ENCODE measurements at regions of chr10 and their contacts with region 1.

Region 1: DNA sequence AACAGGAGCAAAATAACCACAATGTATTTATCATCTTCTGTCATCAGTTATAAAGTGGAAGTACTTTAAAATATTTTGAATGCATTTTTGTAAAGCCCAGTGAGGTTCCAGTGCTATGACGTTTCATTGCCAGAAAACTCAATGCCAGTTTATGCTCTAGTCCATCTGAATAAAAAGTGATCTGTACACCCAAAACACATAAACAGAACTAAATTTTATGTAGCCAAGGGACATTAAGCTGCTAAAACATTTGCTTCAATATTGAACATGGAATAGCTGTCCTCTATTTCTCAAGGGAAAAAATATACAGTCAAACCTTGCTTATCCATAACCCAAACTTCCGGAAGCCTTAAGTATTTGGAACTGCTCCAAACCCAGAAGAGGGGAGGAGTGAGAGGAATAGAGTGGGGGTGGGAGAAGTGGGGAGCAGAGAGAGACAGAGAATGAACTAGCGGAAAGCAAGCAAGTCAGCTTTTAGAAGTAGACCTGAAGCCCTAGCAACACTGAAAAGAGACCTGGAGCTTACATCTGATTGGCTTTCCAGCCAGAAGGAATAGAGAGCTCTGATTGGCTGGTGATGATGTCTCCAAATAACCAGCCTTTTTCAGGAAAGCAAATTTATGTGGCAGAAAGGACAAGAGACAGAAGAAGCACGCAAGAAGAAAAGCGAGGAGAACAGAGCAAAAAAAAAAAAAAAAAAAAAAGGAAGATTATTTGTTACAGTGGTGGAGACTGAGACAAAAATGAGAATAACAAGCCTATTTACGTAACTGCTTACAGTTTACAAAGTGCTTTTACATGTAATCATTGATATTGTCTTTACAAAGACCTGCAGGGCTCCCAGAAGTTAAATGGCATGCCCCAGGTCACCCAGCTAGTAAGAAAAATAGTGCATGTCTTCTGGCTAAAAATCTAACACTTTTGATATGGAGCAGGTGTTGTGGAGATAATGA is 196.0 kb downstream of the RNLS start:
- DNase-seq: no peak
- H3K4me3 ChIP-seq: no peak overlapping the region
- H3K27ac ChIP-seq: no peak overlapping the region
- H3K4me1 ChIP-seq: peaks cover 0 to 2% (median 0%) of the 10 kb centered on the region in 4 experiments; a peak in 1 of 7 replicates
- H3K27me3 ChIP-seq: no peaks in the 10 kb centered on the region
- CTCF ChIP-seq: no peak
- EP300 ChIP-seq: no peak
- POLR2A ChIP-seq: no peak
- RAD21 ChIP-seq: no peak

Region 2: GRCh38 chr10:87850742-87851205 is 536.3 kb before region 1 on chr10:
- CTCF ChIA-PET with region 1: interaction called, 25 read pairs
- POLR2A ChIA-PET with region 1: no interaction called
- DNase-seq: no peak
- H3K4me3 ChIP-seq: no peak overlapping the region
- H3K27ac ChIP-seq: no peak overlapping the region
- H3K4me1 ChIP-seq: no peaks in the 10 kb centered on the region
- H3K27me3 ChIP-seq: no peaks in the 10 kb centered on the region
- CTCF ChIP-seq: peak; percentile 62 to 88 (median 72)
- EP300 ChIP-seq: no peak
- POLR2A ChIP-seq: no peak
- RAD21 ChIP-seq: peak; percentile 91

Region 3: GRCh38 chr10:88292185-88292514 is 94.9 kb before region 1 on chr10:
- CTCF ChIA-PET with region 1: interaction called, 12 read pairs
- POLR2A ChIA-PET with region 1: no interaction called
- DNase-seq: no peak
- H3K4me3 ChIP-seq: no peak overlapping the region
- H3K27ac ChIP-seq: no peak overlapping the region
- H3K4me1 ChIP-seq: no peaks in the 10 kb centered on the region
- H3K27me3 ChIP-seq: no peaks in the 10 kb centered on the region
- CTCF ChIP-seq: no peak
- EP300 ChIP-seq: no peak
- POLR2A ChIP-seq: no peak
- RAD21 ChIP-seq: no peak

Region 4: DNA sequence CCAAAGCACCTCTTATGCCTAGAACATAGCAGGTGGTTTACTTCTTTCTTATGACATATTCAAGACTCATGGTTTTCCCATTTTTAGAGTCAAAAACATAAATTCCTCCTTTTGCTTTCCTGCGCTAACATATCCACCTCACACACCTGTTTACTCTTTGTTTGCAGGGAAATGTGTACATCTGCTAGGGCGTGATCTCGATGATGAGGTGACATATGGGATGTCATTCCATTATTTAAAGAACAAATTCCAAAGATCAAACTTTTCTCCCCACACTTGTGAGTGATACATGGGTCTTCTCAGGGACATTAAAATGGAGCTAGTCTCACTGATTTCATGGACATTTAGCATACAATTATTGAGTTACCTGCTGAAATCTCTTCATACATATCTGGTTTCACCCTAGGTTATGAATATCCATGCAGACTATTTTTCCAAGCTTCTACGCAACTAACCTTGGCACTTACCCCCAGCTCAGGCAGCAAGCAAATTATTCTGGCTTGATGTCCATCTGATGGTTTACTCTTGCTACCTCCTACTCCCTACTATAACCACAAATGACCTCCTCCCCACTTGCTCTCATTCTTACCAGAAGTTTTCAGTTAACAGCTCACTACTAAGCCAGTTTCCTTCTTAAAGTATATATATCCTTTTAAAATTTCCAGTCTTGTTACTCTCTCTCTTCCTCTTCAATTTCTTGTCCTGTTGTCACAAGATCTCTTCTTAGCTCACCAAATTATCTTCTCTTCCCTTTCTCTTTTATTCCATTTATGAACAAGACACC is 12.5 kb before region 1 on chr10:
- CTCF ChIA-PET with region 1: interaction called, 21 read pairs
- POLR2A ChIA-PET with region 1: no interaction called
- DNase-seq: no peak
- H3K4me3 ChIP-seq: no peak overlapping the region
- H3K27ac ChIP-seq: no peak overlapping the region
- H3K4me1 ChIP-seq: no peaks in the 10 kb centered on the region
- H3K27me3 ChIP-seq: no peaks in the 10 kb centered on the region
- CTCF ChIP-seq: no peak
- EP300 ChIP-seq: no peak
- POLR2A ChIP-seq: no peak
- RAD21 ChIP-seq: no peak

Region 5: DNA sequence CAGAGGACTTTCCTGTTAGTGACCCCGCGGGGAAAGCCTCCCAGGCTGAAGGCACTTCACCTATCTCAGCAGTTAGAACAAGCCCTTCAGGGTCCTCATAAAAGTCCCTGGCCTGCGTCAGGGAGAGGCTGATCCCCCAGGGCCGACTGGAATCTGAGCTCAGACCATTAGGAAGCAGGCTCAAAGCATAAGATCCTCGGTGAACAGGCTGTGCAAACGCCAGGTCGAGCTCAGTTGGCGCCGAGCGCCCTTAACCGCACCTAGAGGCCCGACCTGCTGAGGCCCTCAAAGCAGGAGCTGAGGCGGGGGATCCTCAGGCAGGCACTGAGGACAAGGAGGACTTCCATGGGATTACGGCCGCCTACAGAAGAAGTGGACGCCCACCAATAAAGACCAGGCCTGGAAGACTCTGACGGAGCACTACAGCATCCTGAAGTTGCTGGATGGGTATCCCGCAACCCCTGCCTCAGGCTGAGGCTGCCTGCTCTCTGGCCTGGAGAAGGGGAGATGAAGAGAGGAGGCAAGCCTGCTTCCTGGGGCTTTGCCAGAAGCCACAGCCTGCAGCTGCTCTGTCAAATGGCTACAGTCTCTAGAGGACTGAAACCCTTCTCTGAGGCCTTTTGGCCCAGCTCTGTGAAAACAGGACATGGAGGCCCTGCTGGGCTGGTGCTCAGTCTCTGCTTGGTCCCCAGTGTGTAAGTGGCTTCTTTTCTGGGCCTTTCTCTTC is 229.3 kb after region 1 on chr10:
- CTCF ChIA-PET with region 1: no interaction called
- POLR2A ChIA-PET with region 1: no interaction called
- DNase-seq: no peak
- H3K4me3 ChIP-seq: no peak overlapping the region
- H3K27ac ChIP-seq: no peak overlapping the region
- H3K4me1 ChIP-seq: no peaks in the 10 kb centered on the region
- H3K27me3 ChIP-seq: no peaks in the 10 kb centered on the region
- CTCF ChIP-seq: no peak
- EP300 ChIP-seq: no peak
- POLR2A ChIP-seq: no peak
- RAD21 ChIP-seq: no peak

Measured in H1 (cell line).